OCI-LY7 (cell line): ENCODE measurements at regions of chr10 and their contacts with region 1.

Region 1: DNA sequence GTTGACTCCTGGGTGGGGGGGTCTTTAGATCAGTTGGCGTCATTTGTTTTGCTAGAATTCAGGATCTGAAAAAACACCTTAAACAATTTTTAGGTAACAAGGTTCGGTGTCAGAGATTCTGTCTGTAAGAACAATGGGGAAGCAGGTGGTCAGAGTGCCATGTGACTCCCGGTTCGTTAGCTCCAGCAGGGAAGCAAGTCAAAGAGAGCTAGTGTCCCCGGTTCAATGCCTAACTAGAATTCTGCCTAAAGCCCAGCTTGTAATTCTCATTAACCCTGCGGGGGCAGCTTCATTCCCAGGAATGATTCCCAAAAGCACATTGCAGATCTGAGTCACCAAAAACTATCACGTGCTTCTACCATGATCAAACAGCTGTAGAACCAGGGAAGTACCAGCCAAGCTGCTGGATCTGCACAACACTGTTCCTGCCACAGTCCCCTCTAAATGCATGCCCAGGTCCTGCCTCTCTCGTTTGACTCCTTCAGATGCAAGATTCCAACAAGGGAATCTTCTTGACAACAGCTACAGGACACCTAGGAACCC is 664.3 kb upstream of the CELF2 start:
- DNase-seq: no peak
- H3K4me3 ChIP-seq: no peak overlapping the region
- H3K27ac ChIP-seq: no peak overlapping the region
- H3K4me1 ChIP-seq: no peaks in the 10 kb centered on the region
- CTCF ChIP-seq: no peak

Region 2: DNA sequence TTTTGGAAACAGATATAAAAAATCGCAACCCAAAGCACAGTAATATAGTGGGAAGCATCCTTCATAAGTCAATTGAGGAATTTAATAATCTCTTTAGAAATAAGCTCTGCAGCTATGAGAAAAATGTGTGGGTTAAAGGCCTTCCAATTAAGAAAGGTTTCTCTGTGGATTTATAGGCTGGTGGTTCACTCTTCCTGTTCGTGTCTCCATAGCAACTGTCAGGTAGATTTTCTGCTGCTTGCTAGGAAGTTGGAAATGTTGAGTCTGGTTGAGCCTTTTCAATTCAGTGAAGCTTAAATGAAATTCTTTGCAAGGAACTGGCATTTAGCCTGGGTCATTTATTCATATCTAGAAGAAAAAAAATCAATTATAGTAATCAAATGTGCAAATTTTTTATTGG is 11.5 kb after region 1 on chr10:
- CTCF ChIA-PET with region 1: no interaction called
- POLR2A ChIA-PET with region 1: interaction called, 13 read pairs
- intact Hi-C with region 1: no loop called
- DNase-seq: no peak
- H3K4me3 ChIP-seq: no peak overlapping the region
- H3K27ac ChIP-seq: no peak overlapping the region
- H3K4me1 ChIP-seq: no peaks in the 10 kb centered on the region
- CTCF ChIP-seq: no peak

Region 3: GRCh38 chr10:10394933-10395656 is 41.7 kb after region 1 on chr10:
- CTCF ChIA-PET with region 1: no interaction called
- POLR2A ChIA-PET with region 1: no interaction called
- intact Hi-C with region 1: no loop called
- DNase-seq: no peak
- H3K4me3 ChIP-seq: no peak overlapping the region
- H3K27ac ChIP-seq: no peak overlapping the region
- H3K4me1 ChIP-seq: no peaks in the 10 kb centered on the region
- CTCF ChIP-seq: no peak